K562 (cell line): ENCODE measurements at regions of chr13 and their contacts with region 1.

Region 1: GRCh38 chr13:54742984-54743383 is 1714.4 kb downstream of the OLFM4 start:
- DNase-seq: no peak
- ATAC-seq: no peak
- H3K4me3 ChIP-seq: no peak overlapping the region
- H3K27ac ChIP-seq: no peak overlapping the region
- H3K4me1 ChIP-seq: no peaks in the 10 kb centered on the region
- H3K27me3 ChIP-seq: no peaks in the 10 kb centered on the region
- CTCF ChIP-seq: no peak
- EP300 ChIP-seq: no peak
- POLR2A ChIP-seq: no peak
- RAD21 ChIP-seq: no peak

Region 2: GRCh38 chr13:53907891-53908290 is 835.1 kb before region 1 on chr13:
- CTCF ChIA-PET with region 1: no interaction called
- POLR2A ChIA-PET with region 1: no interaction called
- in situ Hi-C with region 1: no loop called
- intact Hi-C with region 1: no loop called
- DNase-seq: no peak
- ATAC-seq: no peak
- H3K4me3 ChIP-seq: no peak overlapping the region
- H3K27ac ChIP-seq: no peak overlapping the region
- H3K4me1 ChIP-seq: no peaks in the 10 kb centered on the region
- H3K27me3 ChIP-seq: no peaks in the 10 kb centered on the region
- CTCF ChIP-seq: no peak
- EP300 ChIP-seq: no peak
- POLR2A ChIP-seq: no peak
- RAD21 ChIP-seq: no peak

Region 3: GRCh38 chr13:54676526-54677113 is 66.4 kb before region 1 on chr13:
- CTCF ChIA-PET with region 1: no interaction called
- POLR2A ChIA-PET with region 1: no interaction called
- in situ Hi-C with region 1: no loop called
- intact Hi-C with region 1: no loop called
- DNase-seq: no peak
- ATAC-seq: no peak
- H3K4me3 ChIP-seq: no peak overlapping the region
- H3K27ac ChIP-seq: no peak overlapping the region
- H3K4me1 ChIP-seq: no peaks in the 10 kb centered on the region
- H3K27me3 ChIP-seq: no peaks in the 10 kb centered on the region
- CTCF ChIP-seq: no peak
- EP300 ChIP-seq: no peak
- POLR2A ChIP-seq: no peak
- RAD21 ChIP-seq: no peak

Region 4: GRCh38 chr13:54928071-54928470 is 185.1 kb after region 1 on chr13:
- CTCF ChIA-PET with region 1: no interaction called
- POLR2A ChIA-PET with region 1: no interaction called
- in situ Hi-C with region 1: no loop called
- intact Hi-C with region 1: no loop called
- DNase-seq: no peak
- ATAC-seq: no peak
- H3K4me3 ChIP-seq: no peak overlapping the region
- H3K27ac ChIP-seq: no peak overlapping the region
- H3K4me1 ChIP-seq: no peaks in the 10 kb centered on the region
- H3K27me3 ChIP-seq: no peaks in the 10 kb centered on the region
- CTCF ChIP-seq: no peak
- EP300 ChIP-seq: no peak
- POLR2A ChIP-seq: no peak
- RAD21 ChIP-seq: no peak

Region 5: DNA sequence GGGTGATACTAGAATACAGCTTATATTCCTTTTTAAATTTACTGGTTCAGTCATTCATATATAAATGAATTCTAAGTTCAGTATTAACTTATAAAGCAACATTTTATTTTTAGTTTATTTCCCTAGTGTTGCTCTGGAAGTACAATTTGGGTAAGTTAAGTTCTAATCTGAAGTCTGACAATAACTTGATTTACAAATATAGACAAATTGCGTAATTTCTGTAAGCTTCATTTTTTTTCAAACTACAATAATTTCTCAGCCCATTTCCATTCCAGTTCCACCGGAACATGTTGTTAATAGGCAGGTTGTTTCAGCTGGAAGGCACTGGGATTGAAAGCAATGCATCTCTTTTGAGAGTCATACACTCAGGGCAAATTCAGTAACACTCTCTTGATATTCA is 286.3 kb after region 1 on chr13:
- CTCF ChIA-PET with region 1: no interaction called
- POLR2A ChIA-PET with region 1: no interaction called
- in situ Hi-C with region 1: no loop called
- intact Hi-C with region 1: no loop called
- DNase-seq: no peak
- ATAC-seq: no peak
- H3K4me3 ChIP-seq: no peak overlapping the region
- H3K27ac ChIP-seq: no peak overlapping the region
- H3K4me1 ChIP-seq: no peaks in the 10 kb centered on the region
- H3K27me3 ChIP-seq: no peaks in the 10 kb centered on the region
- CTCF ChIP-seq: no peak
- EP300 ChIP-seq: no peak
- POLR2A ChIP-seq: no peak
- RAD21 ChIP-seq: no peak

Region 6: GRCh38 chr13:55345224-55345623 is 602.2 kb after region 1 on chr13:
- CTCF ChIA-PET with region 1: no interaction called
- POLR2A ChIA-PET with region 1: no interaction called
- in situ Hi-C with region 1: loop called (anchors 10 kb)
- intact Hi-C with region 1: no loop called
- DNase-seq: no peak
- ATAC-seq: no peak
- H3K4me3 ChIP-seq: no peak overlapping the region
- H3K27ac ChIP-seq: no peak overlapping the region
- H3K4me1 ChIP-seq: no peaks in the 10 kb centered on the region
- H3K27me3 ChIP-seq: no peaks in the 10 kb centered on the region
- CTCF ChIP-seq: no peak
- EP300 ChIP-seq: no peak
- POLR2A ChIP-seq: no peak
- RAD21 ChIP-seq: no peak